ENCODE measurements at regions of chr11 and their contacts with region 1.

Region 1: DNA sequence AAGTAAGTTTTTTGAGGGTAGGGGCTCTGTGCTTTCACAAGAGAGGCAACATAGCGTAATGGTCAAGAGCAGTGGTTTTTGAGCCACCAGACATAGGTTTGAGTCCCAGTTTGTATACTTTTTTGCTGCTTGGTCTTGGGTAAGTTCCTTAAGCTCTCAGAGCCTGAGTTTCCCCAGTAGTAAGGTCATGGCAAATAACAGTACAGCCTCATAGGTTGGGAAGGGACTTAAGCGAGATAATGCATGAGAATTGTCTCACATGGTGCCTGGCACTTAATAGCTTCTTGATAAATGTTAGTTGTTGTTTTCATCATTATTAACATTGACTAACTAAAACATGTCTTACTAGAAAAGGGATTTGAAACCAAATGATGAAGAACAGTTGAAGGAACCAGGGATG is 83.1 kb downstream of the ARFGAP2 start:
- DNase-seq: no peak
- ATAC-seq: no peak
- H3K4me3 ChIP-seq: no peak overlapping the region
- H3K27ac ChIP-seq: no peak overlapping the region
- H3K4me1 ChIP-seq: no peaks in the 10 kb centered on the region
- H3K27me3 ChIP-seq: no peaks in the 10 kb centered on the region
- CTCF ChIP-seq: no peak
- POLR2A ChIP-seq: no peak

Region 2: DNA sequence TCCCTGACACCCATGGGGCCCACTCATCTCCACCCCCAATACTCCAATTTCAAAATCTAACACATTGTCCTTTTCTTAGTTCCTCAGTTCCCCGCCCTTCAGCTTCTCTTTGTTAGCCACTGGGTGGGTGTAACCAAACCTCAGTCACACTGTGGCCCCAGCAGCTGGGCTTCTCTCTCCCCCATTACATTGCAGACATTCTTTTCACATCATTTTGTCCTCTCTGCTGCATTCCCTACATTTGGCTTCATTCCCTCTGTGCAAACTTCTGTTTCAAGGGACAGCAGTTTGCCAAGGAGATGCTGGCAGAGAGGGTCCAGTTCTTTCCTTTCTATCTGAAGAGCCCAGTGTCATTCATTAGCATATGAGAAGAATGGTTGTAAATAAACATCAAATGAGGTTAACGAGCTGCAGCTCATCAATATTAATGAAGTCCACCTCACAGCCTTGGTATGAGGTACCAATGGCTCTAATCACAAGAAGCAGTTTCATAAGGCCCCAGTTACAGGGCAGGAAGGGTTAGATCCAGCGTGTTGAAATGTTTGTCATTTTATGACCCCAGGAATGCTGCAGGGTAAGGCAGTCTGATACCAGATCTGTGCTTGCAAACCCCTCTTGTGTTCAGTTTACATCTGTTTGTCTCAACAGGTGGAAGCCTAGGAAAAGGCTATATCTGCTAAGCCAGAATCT is 10.9 kb after region 1 on chr11:
- intact Hi-C with region 1: loop called in 1 of 10 experiments (anchors 1 kb)
- DNase-seq: no peak
- ATAC-seq: no peak
- H3K4me3 ChIP-seq: no peak overlapping the region
- H3K27ac ChIP-seq: no peak overlapping the region
- H3K4me1 ChIP-seq: peaks cover 0 to 4% (median 0%) of the 10 kb centered on the region in 12 donors
- H3K27me3 ChIP-seq: no peaks in the 10 kb centered on the region
- CTCF ChIP-seq: no peak
- POLR2A ChIP-seq: no peak

Region 3: DNA sequence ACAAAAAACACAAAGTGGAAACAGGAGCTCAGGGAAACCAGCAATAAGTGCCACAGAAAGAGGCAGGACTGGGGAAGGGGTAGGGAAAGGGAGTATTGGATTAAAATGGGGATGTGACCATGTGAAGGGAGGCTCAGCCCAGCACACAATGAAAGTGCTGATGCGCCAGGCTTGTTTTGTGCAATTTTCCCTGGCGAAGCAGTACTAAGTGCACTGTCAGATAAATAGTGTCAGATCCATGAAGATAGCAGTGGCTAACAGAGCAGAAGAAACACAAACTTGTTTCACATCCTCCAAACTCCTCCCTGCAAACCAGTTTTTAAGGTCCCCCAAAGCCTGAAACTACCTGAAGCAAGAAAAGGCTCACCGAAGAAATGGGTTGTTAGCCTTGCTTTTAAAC is 406.1 kb after region 1 on chr11:
- intact Hi-C with region 1: no loop called
- DNase-seq: peak in 2 of 5 donors; percentile 37 to 56
- ATAC-seq: peak in 3 of 4 donors; percentile 40 to 67 (median 66)
- H3K4me3 ChIP-seq: peak overlapping the region in 2 of 12 donors; percentile 1 to 25
- H3K27ac ChIP-seq: peak overlapping the region in 3 of 12 donors; percentile 9 to 84 (median 28)
- H3K4me1 ChIP-seq: peaks cover 4 to 83% (median 57%) of the 10 kb centered on the region in 12 donors
- H3K27me3 ChIP-seq: no peaks in the 10 kb centered on the region
- CTCF ChIP-seq: no peak
- POLR2A ChIP-seq: no peak